BJ (cell line): ENCODE measurements at regions of chr10 and their contacts with region 1.

Region 1: DNA sequence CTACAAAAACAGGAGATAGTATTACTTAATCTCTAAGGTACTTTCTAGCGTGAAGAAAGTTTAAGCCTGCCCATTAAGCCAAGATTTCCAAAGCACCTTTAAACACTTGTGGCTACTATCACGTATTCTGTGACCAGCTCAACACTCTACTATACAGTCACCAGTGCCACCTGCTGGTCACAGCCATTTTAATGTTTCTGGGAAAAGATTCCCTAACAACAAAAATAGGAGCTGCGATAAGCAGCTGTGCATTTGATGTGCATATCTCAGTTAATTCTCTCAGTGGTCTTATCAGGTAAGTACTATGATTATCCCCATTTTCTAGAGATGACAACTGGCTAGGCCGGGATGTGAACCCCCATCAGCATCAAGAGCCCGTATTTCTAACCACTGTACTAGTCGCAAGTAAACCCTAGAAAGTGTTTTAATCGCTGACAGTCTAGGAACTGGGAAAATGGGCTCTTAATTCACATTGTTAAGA is 860 bp downstream of the SEC31B start:
- DNase-seq: no peak
- H3K4me3 ChIP-seq: no peak overlapping the region
- H3K27me3 ChIP-seq: no peaks in the 10 kb centered on the region
- CTCF ChIP-seq: peak; percentile 73

Region 2: GRCh38 chr10:100346765-100347567 is 171.8 kb before region 1 on chr10 and contains the start of gene SCD:
- CTCF ChIA-PET with region 1: interaction called, 249 read pairs
- POLR2A ChIA-PET with region 1: no interaction called
- DNase-seq: peak; percentile 59
- H3K4me3 ChIP-seq: peak within 1 kb of the TSS; percentile 73
- H3K27me3 ChIP-seq: no peaks in the 10 kb centered on the region
- CTCF ChIP-seq: no peak
- polyA plus RNA-seq, gene SCD: 32.1 and 40.8 TPM in 2 replicates

Region 3: DNA sequence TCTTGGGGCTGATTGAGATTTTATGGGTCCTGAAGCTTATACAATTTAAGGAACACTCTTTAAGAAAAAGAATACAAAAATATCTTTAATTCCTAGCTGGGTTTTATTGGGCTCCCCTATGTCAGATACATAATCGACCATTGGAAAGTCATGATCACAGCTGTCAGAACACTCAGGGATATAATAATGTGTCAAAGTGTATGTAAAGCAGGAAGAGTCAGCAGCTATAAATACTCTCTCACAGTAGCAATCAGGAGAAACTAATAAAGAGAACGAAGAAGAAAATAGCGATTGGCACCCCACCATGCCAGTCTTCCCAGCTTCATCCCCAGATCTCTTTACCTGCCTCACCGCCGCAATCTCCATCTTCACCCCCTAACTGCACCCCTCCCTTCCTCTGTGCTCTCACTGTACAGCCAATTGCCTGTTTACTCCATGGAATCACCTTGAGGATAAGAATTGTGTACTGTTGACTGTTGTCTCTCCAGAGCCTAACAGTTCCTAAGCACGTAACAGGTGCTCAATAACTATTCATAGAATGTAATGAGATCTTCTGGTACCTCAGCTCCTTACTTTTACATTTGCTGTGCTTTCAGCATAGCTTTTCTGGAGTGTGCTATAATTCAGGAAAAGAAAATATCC is 80.0 kb before region 1 on chr10:
- CTCF ChIA-PET with region 1: interaction called, 38 read pairs
- POLR2A ChIA-PET with region 1: no interaction called
- DNase-seq: no peak
- H3K4me3 ChIP-seq: no peak overlapping the region
- H3K27me3 ChIP-seq: no peaks in the 10 kb centered on the region; the same call in 1 of the 2 replicates
- CTCF ChIP-seq: no peak

Region 4: DNA sequence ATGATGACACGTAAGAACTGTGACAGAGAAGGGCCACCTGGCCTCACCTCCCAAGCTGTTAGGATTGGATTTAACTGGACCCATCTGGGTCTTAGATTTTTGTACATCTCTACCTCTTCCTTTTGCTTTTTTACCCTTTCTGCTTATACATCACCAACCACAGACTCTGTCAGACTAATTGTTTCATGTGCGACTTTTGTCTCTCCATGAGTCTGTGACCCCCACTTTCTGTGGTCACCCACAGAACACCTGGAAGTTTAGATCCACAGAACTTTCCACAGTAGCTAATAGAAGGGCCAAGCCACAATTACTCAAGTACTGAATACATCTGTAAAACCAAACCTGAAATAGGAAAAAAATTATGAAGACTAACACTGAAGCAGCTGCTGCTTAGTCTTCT is 22.2 kb before region 1 on chr10:
- CTCF ChIA-PET with region 1: interaction called, 17 read pairs
- POLR2A ChIA-PET with region 1: no interaction called
- DNase-seq: no peak
- H3K4me3 ChIP-seq: no peak overlapping the region
- H3K27me3 ChIP-seq: no peaks in the 10 kb centered on the region
- CTCF ChIP-seq: no peak

Region 5: GRCh38 chr10:100529475-100530298 is 10.9 kb after region 1 on chr10 and contains the start of gene NDUFB8:
- CTCF ChIA-PET with region 1: interaction called, 21 read pairs
- POLR2A ChIA-PET with region 1: no interaction called
- DNase-seq: no peak
- H3K4me3 ChIP-seq: peak within 1 kb of the TSS; percentile 97
- H3K27me3 ChIP-seq: no peaks in the 10 kb centered on the region
- CTCF ChIP-seq: no peak
- polyA plus RNA-seq, gene NDUFB8: 170 and 197 TPM in 2 replicates